ENCODE measurements at regions of chr5 and their contacts with region 1.

Region 1: DNA sequence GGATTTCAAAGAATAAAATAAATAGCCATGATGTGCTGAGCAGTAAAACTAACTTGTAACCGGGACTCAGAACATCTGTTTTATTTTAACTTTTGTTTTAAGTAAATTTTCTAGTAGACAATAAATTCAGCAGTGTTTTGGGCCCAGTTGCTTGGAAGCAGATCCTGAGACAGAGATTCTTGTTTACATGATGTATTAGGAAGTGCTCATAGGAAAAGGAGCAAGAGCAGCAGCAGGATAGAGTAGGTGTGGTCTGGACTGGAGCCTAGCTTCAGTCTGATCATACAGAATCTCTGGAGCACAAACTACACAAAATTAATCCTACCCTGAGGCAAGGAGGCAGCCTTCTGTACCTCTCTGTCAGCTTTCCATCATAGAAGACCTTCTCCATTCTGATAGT is 139.2 kb upstream of the CCNH start:
- DNase-seq: no peak
- ATAC-seq: no peak
- H3K4me3 ChIP-seq: no peak overlapping the region
- H3K27ac ChIP-seq: no peak overlapping the region
- H3K4me1 ChIP-seq: no peaks in the 10 kb centered on the region
- H3K27me3 ChIP-seq: no peaks in the 10 kb centered on the region
- CTCF ChIP-seq: no peak
- POLR2A ChIP-seq: no peak
- RAD21 ChIP-seq: no peak

Region 2: GRCh38 chr5:87535706-87536105 is 16.2 kb before region 1 on chr5:
- CTCF ChIA-PET with region 1: no interaction called
- POLR2A ChIA-PET with region 1: no interaction called
- RAD21 ChIA-PET with region 1: no interaction called
- intact Hi-C with region 1: no loop called
- DNase-seq: no peak
- ATAC-seq: no peak
- H3K4me3 ChIP-seq: no peak overlapping the region
- H3K27ac ChIP-seq: no peak overlapping the region
- H3K4me1 ChIP-seq: no peaks in the 10 kb centered on the region
- H3K27me3 ChIP-seq: no peaks in the 10 kb centered on the region
- CTCF ChIP-seq: no peak
- POLR2A ChIP-seq: no peak
- RAD21 ChIP-seq: no peak

Region 3: DNA sequence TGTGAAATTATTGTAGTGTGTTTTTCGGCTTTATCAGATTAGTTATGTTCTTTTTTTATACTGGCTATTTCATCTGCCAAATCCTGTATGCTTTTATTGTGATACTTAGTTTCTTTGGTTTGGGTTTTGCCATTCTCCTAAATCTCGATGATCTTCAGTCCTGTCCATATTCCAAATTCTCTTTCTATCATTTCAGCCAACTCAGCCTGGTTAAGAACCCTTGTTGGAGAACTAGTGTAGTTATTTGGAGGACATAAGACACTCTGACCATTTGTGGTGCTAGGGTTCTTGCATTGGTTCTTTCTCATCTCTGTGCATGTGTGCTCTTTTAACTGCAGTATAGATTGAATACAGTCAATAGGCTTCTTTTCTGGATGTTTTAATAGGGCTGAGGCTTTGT is 47.9 kb after region 1 on chr5:
- CTCF ChIA-PET with region 1: no interaction called
- POLR2A ChIA-PET with region 1: no interaction called
- RAD21 ChIA-PET with region 1: no interaction called
- intact Hi-C with region 1: loop called (anchors 5 kb)
- DNase-seq: no peak
- ATAC-seq: no peak
- H3K4me3 ChIP-seq: no peak overlapping the region
- H3K27ac ChIP-seq: no peak overlapping the region
- H3K4me1 ChIP-seq: no peaks in the 10 kb centered on the region
- H3K27me3 ChIP-seq: no peaks in the 10 kb centered on the region
- CTCF ChIP-seq: no peak
- POLR2A ChIP-seq: no peak
- RAD21 ChIP-seq: no peak

Region 4: GRCh38 chr5:87780831-87781760 is 229.2 kb after region 1 on chr5:
- CTCF ChIA-PET with region 1: no interaction called
- POLR2A ChIA-PET with region 1: no interaction called
- RAD21 ChIA-PET with region 1: no interaction called
- intact Hi-C with region 1: no loop called
- DNase-seq: peak; percentile 76
- ATAC-seq: peak; percentile 98
- H3K4me3 ChIP-seq: no peak overlapping the region; a peak in 1 of 4 replicates
- H3K27ac ChIP-seq: no peak overlapping the region
- H3K4me1 ChIP-seq: peaks cover 0 to 3% of the 10 kb centered on the region in 2 experiments; a peak in 1 of 4 replicates
- H3K27me3 ChIP-seq: no peaks in the 10 kb centered on the region
- CTCF ChIP-seq: peak; percentile 72 to 91 (median 85)
- POLR2A ChIP-seq: no peak
- RAD21 ChIP-seq: peak; percentile 95

Measured in HCT116 (cell line).